Sciatic nerve (tissue), 2 donors: ENCODE measurements at regions of chrX and their contacts with region 1.

Region 1: GRCh38 chrX:71936632-71937031 is 26.0 kb downstream of the NHSL2 start:
- DNase-seq: no peak
- ATAC-seq: no peak

Region 2: DNA sequence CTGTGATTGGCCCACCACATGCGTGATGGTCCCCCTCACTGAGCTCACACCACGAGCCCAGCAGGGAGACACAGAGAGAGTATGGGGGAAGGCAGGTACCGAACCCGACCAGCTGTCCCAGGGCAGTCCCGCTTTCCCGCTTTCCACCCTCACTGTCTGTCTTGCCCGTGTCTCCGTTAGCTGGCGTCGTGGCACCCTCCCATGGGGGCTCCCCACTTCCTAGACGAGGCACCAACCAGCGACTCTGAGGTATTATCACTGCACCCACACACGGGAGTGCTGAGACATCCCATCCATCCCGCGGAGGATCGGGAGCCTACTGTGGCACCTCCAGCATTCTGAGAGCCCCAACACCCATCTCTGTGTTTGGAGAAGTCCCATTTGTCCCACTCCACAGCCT is 69.0 kb before region 1 on chrX:
- intact Hi-C with region 1: loop called (anchors 2 kb)
- DNase-seq: no peak
- ATAC-seq: no peak

Region 3: GRCh38 chrX:72045552-72046277 is 109.1 kb after region 1 on chrX:
- intact Hi-C with region 1: no loop called
- DNase-seq: no peak
- ATAC-seq: no peak